ENCODE measurements at regions of chr18 and their contacts with region 1.

Region 1: GRCh38 chr18:44789710-44790109 is 109.0 kb downstream of the SETBP1 start:
- DNase-seq: no peak

Region 2: GRCh38 chr18:44709307-44710126 is 80.2 kb before region 1 on chr18:
- intact Hi-C with region 1: loop called (anchors 5 kb)
- DNase-seq: no peak

Region 3: DNA sequence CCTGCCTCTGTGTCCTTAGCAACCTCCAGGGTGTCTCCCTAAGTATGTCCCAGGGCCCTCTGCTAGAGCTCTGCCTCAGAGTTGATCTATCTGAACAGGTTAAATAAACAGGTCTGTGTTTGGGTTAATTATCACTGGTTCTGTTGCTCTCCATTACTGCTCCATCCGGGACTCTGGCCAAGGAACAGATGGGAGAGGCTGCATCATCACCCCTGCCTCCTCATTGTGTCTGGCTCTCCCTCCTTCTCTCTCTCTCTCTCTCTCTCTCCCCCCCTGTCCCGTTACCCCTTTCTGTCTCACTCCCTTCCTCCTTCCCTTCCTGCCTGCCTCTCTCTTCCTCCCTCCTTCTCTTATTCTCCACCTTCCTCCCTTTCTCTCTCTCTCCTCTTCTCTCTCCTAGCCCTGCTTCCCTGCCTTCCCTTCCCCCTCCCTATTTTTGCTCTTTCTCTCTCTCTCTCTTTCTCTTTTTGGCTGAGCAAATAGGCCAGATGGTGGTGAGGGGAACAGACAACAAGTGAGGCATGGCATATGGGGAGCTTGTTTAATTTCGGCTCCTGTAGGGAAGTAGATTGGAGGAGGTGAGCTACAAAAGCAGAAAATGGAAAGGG is 46.9 kb before region 1 on chr18:
- intact Hi-C with region 1: loop called (anchors 5 kb)
- DNase-seq: no peak

Measured in cardiac septum (tissue), 1 donor.